Cardiac septum (tissue), 1 donor: ENCODE measurements at regions of chr3 and their contacts with region 1.

Region 1: GRCh38 chr3:49476563-49476962 is 6.5 kb downstream of the DAG1 start:
- DNase-seq: no peak

Region 2: DNA sequence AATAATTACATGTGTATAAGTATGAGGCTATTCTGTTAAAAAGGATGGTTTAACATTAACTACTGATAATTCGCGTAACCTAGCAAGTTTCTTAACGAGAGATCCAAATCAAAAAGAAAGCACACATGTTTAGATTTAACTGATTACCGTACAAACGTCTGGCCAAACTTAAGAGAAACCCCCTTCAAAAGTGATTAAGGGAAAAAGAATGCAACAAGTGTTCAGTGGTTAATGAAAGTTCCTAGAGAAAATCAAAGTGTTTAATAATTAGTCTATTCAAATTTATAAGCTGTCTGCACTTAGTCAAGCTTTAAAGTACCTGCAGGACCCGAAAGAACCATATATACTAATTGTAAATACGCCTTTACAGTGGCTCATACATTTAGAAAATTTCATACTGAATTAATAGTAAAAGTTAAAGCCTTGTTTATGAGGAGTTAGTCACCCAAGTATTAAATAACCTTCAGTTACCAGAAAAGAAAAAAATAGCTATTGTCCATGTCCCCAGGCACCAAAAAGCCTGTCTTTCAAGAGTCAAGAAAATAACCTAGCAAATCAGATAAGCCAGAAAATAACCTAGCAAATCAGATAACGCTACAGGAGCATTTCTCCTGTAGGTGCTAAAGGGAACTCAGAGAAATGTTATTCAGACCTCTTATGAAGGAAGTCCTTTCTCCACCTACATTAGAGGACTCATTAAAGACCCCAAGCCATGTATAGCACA is 1201.1 kb before region 1 on chr3:
- intact Hi-C with region 1: no loop called
- DNase-seq: no peak

Region 3: GRCh38 chr3:49399461-49399860 is 77.1 kb before region 1 on chr3:
- intact Hi-C with region 1: no loop called
- DNase-seq: no peak

Region 4: DNA sequence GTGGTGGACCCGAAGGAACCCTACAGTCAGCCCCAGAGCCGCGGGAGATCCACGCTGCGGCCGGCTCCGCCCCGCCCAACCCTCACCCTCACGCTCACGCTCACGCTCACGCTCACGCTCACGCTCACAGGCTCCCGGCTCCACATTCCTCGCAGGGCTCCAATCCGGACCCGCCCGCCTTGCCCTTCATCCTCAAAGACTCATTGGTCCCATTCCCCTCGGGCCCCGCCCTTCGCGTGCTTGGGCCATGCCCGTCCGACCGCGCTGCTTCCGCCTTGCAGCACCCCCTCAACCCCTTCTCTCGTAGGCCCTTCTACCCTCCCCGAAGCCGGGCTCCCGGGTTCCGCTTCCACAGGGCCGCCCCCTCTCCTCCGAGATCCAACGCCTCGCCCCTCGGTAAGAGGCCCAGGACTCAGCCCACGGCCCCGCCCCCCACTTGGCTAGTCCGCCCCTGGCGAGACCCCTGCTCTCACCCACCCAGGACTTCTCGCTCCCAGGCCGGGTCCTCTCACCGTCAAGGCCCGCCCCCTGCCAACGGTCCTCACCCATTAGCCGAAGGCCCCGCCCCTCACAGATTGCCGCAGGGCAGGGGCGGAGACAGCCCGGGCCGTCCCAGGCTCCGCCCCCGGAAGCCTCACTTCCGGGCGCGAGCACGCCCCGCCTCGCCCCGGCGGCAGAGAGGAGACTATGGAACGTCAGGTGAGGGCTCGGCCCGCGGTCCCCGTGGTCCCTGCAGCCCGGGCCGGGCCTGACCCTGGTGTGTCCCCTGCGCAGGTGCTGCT is 197.3 kb after region 1 on chr3 and contains the start of gene APEH:
- intact Hi-C with region 1: loop called (anchors 5 kb)
- DNase-seq: peak; percentile 97
- total RNA-seq, gene APEH: 81.4 TPM

Region 5: GRCh38 chr3:49712631-49713319 is 236.2 kb after region 1 on chr3:
- intact Hi-C with region 1: no loop called
- DNase-seq: no peak